AG04450 (cell line): ENCODE measurements at regions of chr20 and their contacts with region 1.

Region 1: GRCh38 chr20:49888345-49888966 is 26.9 kb downstream of the SPATA2 start:
- DNase-seq: no peak
- H3K4me3 ChIP-seq: no peak overlapping the region
- H3K27ac ChIP-seq: no peak overlapping the region
- H3K27me3 ChIP-seq: no peaks in the 10 kb centered on the region
- CTCF ChIP-seq: peak; percentile 84

Region 2: DNA sequence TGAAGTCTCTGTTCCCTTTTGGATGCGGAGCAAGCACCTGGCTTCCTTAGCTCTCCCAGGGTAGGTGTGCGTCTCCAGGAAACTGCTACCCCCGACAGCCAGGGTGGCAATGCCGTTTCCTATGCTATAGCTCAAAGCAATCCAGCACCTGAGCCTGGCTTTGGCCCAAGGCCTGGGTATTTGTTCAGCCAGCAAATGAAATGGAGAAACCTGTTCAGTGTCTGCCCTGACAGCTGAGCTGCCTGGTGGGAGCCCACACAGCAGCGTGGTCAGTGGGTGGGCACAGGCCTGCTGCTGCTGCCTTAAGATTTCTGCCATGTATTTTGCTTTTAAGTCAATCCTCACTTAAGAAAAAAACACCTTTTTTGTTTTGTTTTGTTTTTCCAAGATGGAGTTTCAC is 13.1 kb after region 1 on chr20:
- CTCF ChIA-PET with region 1: interaction called, 11 read pairs
- POLR2A ChIA-PET with region 1: no interaction called
- DNase-seq: no peak
- H3K4me3 ChIP-seq: no peak overlapping the region
- H3K27ac ChIP-seq: no peak overlapping the region
- H3K27me3 ChIP-seq: no peaks in the 10 kb centered on the region
- CTCF ChIP-seq: no peak

Region 3: DNA sequence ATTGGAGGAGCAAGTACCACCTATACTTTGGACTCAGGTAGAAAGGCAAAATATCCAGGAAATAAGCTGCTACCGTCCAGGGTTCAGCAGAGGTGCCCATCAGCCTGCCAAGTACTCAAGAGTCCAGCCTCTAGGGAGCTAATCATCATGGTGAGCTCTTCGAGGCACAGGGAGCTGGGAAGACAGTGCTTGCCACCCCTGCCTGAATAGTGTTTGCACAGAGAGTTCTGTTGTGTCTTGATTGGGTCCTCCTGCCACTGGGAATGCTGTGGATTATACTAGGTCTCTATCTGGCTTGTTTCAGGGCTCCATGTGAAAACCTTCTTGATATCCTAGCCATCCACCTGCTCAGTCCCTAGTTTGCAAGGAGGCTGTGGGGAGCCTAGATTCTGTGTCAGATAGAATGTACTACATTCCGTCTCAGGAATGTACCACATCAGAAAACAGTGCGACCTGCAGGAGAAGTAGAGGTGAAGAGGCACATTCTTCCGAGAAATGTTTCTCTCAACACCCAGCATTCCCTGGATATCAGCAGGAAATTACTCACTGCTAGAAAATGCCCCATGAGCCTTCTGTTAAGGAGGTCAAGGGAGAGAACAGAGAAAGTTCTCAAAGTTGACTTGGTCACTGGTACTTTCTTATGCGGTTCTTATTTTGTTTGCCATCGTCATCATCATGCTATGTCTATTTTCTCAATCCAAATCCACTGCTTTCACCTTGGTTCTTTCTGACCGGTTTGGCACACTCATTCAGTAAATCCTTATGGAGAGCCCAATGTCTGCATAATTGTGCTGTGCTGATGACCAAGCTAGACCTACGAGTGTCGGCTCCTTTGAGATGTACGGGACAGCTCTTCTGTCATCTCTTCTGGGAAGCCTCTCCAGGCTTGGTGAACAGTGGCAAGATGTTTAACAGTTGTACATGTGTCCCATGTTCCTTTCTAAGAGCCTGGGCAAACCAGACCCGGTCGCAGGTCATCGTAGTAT is 652.5 kb after region 1 on chr20:
- CTCF ChIA-PET with region 1: no interaction called
- POLR2A ChIA-PET with region 1: no interaction called
- DNase-seq: peak; percentile 79
- H3K4me3 ChIP-seq: no peak overlapping the region
- H3K27ac ChIP-seq: peak overlapping the region; percentile 95
- H3K27me3 ChIP-seq: no peaks in the 10 kb centered on the region
- CTCF ChIP-seq: no peak